GM10248 (cell line): ENCODE measurements at regions of chr1 and their contacts with region 1.

Region 1: GRCh38 chr1:43238085-43238484 is 31.7 kb upstream of the TMEM125 start:
- DNase-seq: peak; percentile 68
- CTCF ChIP-seq: peak; percentile 79

Region 2: DNA sequence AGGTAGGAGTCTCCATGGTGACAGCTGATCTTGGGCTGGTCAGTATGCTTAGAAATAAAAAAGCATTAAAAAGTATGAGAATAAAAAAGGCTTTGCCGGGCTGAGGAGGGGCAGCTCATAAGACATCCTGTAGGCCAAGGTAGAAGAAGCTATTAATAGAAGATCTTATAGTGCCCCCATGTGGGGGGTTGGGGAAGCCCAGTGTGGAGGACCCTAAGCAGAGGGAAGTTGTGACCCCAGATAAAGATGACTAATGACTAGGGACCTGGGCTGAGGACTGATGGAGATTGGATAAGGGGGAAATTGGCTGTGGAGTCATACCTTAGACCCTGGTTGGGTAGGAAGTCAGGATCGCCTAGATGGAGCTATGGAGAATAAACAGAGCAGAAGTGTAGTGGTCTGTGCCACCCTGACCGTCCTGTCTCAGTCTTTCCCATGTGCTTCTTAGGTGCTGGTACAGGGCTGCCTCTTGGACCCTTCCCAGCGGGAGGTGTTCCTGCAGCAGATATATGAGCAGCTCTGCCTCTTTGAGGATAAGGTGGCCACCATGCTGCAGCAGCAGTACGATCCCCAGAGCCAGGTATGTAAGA is 176.6 kb after region 1 on chr1:
- CTCF ChIA-PET with region 1: interaction called, 10 read pairs
- POLR2A ChIA-PET with region 1: no interaction called
- DNase-seq: peak; percentile 40
- CTCF ChIP-seq: peak; percentile 37